A549 (cell line): ENCODE measurements at regions of chr14 and their contacts with region 1.

Region 1: DNA sequence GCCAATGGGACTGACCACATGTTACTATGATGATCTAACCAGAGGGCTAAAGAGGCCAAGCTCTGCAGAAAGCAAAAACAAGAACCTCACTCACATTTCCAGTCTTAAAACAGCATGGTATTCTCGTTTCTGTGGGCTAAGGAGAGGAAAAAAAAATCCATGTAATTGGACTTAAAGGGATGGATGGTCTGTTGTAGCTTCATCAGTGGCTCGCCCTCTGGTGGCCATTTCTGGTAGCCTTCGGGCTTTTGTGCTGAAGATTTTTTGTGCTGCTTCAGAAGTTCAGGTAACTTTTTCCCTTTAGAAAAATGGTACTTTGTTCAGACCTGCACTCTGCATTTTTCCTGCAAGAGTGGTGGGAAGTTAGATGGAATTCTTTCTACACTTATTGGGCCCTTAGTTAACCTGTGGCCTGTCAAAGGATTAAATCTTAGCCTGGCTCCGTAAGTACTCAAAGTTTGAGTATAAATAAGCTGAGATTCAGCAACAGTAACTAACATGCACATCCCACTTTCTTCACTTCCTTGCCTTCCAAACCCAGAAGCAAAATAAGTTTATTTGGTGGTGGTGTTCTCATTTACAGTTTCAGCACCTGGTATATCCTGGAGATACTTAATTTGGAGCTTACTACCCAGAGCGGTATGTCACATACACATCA is 22.3 kb downstream of the DCAF4 start:
- DNase-seq: peak; percentile 50 to 58
- ATAC-seq: peak; percentile 50 to 79; a peak in 3 of 6 replicates
- H3K4me3 ChIP-seq: no peak overlapping the region
- H3K27ac ChIP-seq: no peak overlapping the region
- H3K4me1 ChIP-seq: no peaks in the 10 kb centered on the region
- CTCF ChIP-seq: peak; percentile 86
- EP300 ChIP-seq: no peak
- POLR2A ChIP-seq: no peak
- RAD21 ChIP-seq: peak; percentile 62 to 67

Region 2: DNA sequence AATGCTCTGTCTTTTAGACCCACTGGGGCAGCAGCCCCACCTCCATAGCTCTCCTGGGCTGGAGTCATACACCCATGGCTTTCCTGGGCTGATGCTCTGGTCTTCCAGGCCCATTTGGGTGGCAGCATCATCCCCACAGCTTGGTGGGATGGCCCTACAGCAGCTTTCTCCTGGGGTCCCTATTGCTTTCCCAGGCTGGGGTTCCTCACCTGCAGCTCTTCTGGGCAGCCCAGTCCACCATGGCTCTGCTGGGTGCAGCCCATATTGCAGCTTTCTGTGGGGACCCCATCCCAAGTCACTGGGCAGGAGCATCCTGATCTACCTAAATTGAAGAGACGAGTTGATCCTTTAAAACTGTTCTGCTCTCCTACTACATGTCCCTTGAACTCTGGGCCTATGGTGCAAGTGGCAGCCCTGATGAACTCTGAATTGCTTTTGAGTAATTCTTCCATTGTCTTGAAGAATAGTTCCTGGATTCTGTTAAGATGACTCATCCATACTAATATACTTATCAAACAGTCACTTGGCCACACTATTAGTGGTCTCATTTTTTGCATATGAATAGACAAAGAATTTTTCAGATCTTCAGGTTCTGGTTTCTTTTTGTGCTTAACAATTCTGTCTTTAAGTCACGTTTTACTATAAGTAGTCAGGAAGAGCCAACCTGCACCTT is 444.8 kb before region 1 on chr14:
- CTCF ChIA-PET with region 1: interaction called, 201 read pairs
- POLR2A ChIA-PET with region 1: no interaction called
- DNase-seq: no peak
- ATAC-seq: no peak
- H3K4me3 ChIP-seq: no peak overlapping the region
- H3K27ac ChIP-seq: no peak overlapping the region
- H3K4me1 ChIP-seq: no peaks in the 10 kb centered on the region
- CTCF ChIP-seq: no peak
- EP300 ChIP-seq: no peak
- POLR2A ChIP-seq: no peak
- RAD21 ChIP-seq: no peak

Region 3: DNA sequence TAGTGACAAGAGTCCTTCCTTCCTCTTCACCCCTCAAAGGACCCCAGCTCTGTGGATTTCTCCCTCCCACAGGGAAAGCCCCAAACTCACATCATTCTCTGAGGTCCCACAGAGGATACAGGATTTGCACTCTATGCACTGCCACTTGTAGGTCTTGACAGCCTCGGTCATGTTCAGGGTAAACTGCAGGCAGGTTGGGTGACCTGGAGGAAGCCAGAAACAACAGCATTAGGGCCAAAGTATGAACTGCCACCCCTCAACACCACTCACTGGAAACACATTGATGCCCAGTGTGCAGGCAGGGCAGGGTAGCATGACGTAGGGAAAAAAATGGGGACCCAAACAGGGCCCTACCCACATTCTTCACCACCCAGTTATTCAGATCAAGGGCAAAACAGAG is 319.1 kb before region 1 on chr14:
- CTCF ChIA-PET with region 1: no interaction called
- POLR2A ChIA-PET with region 1: no interaction called
- DNase-seq: no peak
- ATAC-seq: no peak
- H3K4me3 ChIP-seq: no peak overlapping the region
- H3K27ac ChIP-seq: no peak overlapping the region
- H3K4me1 ChIP-seq: no peaks in the 10 kb centered on the region
- CTCF ChIP-seq: no peak
- EP300 ChIP-seq: no peak
- POLR2A ChIP-seq: no peak
- RAD21 ChIP-seq: no peak

Region 4: DNA sequence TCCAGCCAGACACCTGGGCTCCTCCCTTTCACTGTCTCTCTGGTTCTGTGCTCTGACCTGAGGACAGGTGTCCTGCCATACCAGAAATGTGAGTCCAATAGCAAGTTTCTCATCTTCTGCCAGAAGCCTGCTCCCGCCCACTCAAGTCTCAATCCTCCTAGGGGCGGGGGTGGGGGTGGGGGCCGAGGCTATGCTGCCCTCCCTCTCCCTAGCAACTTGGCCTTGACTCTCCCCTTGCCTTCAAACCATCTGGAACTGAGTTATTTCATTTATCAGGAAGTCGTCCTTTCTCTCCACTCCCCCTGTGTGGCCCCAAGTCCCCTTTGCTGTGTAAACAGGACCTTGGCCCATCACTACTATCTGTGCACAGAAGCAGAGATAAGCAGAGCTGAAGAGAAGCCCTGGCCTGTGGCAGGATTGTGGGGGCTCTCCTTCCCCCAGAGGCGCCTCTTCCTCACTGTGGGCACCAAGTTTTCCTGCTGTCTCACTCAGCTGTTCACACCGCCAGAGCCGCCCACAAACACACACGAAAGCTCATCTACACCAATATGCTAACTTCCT is 171.8 kb before region 1 on chr14:
- CTCF ChIA-PET with region 1: no interaction called
- POLR2A ChIA-PET with region 1: no interaction called
- DNase-seq: no peak
- ATAC-seq: no peak
- H3K4me3 ChIP-seq: no peak overlapping the region
- H3K27ac ChIP-seq: no peak overlapping the region
- H3K4me1 ChIP-seq: peaks cover 10% of the 10 kb centered on the region
- CTCF ChIP-seq: no peak
- EP300 ChIP-seq: no peak
- POLR2A ChIP-seq: no peak
- RAD21 ChIP-seq: no peak

Region 5: DNA sequence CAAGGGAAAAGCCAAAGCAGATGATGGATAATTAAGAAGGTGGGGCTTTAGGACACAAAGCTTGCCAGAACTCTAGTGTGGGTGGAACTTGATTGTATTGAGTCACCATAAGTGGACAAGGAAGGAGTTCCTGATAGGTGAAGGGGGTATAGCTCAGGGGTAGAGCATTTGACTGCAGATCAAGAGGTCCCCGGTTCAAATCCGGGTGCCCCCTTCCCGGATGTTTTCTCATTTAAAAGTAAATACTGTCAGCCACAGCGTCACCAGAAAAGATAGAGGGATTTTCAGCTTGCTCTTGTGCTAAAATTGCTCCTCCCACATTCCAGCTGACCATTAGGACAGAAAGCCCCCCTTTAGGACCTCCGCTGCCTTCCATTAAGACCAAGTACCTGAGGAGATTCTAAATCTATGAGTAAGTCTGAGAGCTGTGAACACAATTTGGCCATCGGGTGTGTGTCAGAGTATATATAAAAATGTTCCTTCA is 14.3 kb after region 1 on chr14:
- CTCF ChIA-PET with region 1: interaction called, 42 read pairs
- POLR2A ChIA-PET with region 1: no interaction called
- DNase-seq: peak; percentile 81 to 84
- ATAC-seq: peak; percentile 42 to 79; a peak in 5 of 6 replicates
- H3K4me3 ChIP-seq: no peak overlapping the region
- H3K27ac ChIP-seq: no peak overlapping the region
- H3K4me1 ChIP-seq: peaks cover 14% of the 10 kb centered on the region
- CTCF ChIP-seq: no peak
- EP300 ChIP-seq: no peak
- POLR2A ChIP-seq: no peak
- RAD21 ChIP-seq: no peak

Region 6: DNA sequence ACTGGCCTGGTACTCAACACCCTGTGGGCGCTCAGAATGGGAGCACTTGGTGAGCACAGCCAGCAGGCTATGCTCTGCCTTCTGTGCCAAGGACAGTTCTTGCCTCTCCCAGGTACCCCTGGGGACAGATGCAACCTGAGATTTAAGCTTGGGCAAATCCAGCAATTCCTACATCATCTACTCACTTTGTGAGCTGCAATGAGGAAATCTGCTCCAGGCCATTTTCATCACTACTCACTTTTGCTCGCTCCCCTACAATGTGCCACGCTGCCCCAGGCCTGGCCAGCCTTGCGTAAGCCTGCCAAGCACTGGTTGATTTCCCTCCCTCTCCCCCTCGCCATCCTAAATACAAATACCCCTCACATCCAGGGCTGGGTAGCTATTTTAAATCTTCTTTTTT is 23.7 kb after region 1 on chr14:
- CTCF ChIA-PET with region 1: interaction called, 13 read pairs
- POLR2A ChIA-PET with region 1: no interaction called
- DNase-seq: no peak
- ATAC-seq: no peak
- H3K4me3 ChIP-seq: no peak overlapping the region
- H3K27ac ChIP-seq: no peak overlapping the region
- H3K4me1 ChIP-seq: no peaks in the 10 kb centered on the region
- CTCF ChIP-seq: no peak
- EP300 ChIP-seq: no peak
- POLR2A ChIP-seq: no peak
- RAD21 ChIP-seq: no peak

Region 7: DNA sequence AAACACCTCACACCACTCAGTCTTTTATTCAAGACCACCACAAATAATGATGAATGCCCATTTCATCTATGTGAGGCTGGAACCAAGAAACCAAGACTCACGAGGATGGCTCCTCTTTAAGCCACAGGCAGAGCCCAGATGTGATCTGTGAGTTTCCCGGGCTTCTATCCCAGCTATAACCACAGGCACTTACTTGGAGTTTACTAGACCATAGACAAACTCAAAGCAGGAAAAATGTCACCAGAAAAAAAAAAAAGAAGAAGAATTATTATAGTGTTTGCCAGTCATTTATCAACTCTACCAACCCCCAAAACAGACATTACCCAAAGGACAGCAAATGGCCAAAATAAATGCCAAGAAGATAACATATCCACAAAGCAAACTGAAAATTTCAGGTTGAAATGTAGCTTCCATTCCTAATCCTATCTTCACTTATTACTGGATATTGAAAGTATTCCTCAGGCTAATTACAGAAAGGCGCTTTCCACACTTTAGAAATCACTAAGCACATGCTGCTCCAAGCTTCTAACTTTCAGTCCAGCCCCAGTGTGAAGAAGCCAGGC is 33.6 kb after region 1 on chr14:
- CTCF ChIA-PET with region 1: interaction called, 15 read pairs
- POLR2A ChIA-PET with region 1: no interaction called
- DNase-seq: no peak
- ATAC-seq: no peak
- H3K4me3 ChIP-seq: no peak overlapping the region
- H3K27ac ChIP-seq: no peak overlapping the region
- H3K4me1 ChIP-seq: no peaks in the 10 kb centered on the region
- CTCF ChIP-seq: no peak
- EP300 ChIP-seq: no peak
- POLR2A ChIP-seq: no peak
- RAD21 ChIP-seq: no peak